ENCODE measurements at regions of chr10 and their contacts with region 1.

Region 1: GRCh38 chr10:74262856-74263255 is 111.8 kb downstream of the ADK start:
- DNase-seq: no peak
- ATAC-seq: no peak
- H3K4me3 Mint-ChIP-seq: no peak overlapping the region
- H3K27ac Mint-ChIP-seq: no peak overlapping the region
- H3K4me1 Mint-ChIP-seq: peaks cover 15% of the 10 kb centered on the region
- H3K27me3 Mint-ChIP-seq: no peaks in the 10 kb centered on the region
- CTCF ChIP-seq: no peak

Region 2: GRCh38 chr10:74249865-74250264 is 13.0 kb before region 1 on chr10:
- CTCF ChIA-PET with region 1: no interaction called
- POLR2A ChIA-PET with region 1: no interaction called
- intact Hi-C with region 1: no loop called
- DNase-seq: no peak
- ATAC-seq: no peak
- H3K4me3 Mint-ChIP-seq: no peak overlapping the region
- H3K27ac Mint-ChIP-seq: no peak overlapping the region
- H3K4me1 Mint-ChIP-seq: peaks cover 23% of the 10 kb centered on the region
- H3K27me3 Mint-ChIP-seq: no peaks in the 10 kb centered on the region
- CTCF ChIP-seq: no peak

Region 3: GRCh38 chr10:74612195-74612594 is 349.3 kb after region 1 on chr10:
- CTCF ChIA-PET with region 1: no interaction called
- POLR2A ChIA-PET with region 1: no interaction called
- intact Hi-C with region 1: no loop called
- DNase-seq: no peak
- ATAC-seq: no peak
- H3K4me3 Mint-ChIP-seq: no peak overlapping the region
- H3K27ac Mint-ChIP-seq: no peak overlapping the region
- H3K4me1 Mint-ChIP-seq: peaks cover 12% of the 10 kb centered on the region
- H3K27me3 Mint-ChIP-seq: no peaks in the 10 kb centered on the region
- CTCF ChIP-seq: no peak

Region 4: DNA sequence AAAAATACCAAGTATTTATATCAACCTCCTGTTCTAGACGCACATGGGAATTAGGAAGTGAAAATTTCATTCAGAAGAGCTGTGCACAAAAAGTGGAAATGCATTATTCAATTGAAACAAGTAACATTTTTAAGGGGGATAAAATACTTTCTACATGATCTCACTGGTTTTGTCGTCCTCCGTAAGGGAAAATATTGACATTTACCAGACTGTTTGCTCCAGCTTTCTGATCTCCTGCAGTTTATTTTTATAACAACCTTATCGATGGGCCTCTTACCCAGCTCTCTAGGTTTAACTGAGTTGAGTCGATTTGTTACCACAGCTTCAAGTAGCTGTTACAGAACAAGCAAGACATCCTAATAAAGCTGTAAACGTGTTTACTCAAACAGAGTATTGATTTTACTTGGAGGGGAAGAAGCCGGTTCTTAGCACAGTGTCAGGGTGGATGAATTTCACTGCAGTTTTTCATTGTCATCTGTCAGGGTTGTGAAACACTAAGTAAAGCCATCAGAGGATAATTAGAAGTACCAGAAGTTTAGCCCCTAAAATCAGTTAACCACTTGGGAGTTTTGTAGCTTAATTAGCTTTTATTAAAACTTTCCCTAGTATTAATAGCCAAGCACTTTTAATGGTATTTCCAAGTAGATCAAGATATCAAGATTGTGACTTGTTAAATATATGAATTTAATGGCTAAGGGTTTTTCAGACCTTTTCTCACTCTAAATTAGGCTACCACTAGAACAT is 420.9 kb after region 1 on chr10:
- CTCF ChIA-PET with region 1: no interaction called
- POLR2A ChIA-PET with region 1: no interaction called
- intact Hi-C with region 1: loop called (anchors 10 kb)
- DNase-seq: no peak
- ATAC-seq: no peak
- H3K4me3 Mint-ChIP-seq: no peak overlapping the region
- H3K27ac Mint-ChIP-seq: peak overlapping the region; percentile 32
- H3K4me1 Mint-ChIP-seq: peaks cover 17% of the 10 kb centered on the region
- H3K27me3 Mint-ChIP-seq: no peaks in the 10 kb centered on the region
- CTCF ChIP-seq: no peak